GM10248 (cell line): ENCODE measurements at regions of chr2 and their contacts with region 1.

Region 1: DNA sequence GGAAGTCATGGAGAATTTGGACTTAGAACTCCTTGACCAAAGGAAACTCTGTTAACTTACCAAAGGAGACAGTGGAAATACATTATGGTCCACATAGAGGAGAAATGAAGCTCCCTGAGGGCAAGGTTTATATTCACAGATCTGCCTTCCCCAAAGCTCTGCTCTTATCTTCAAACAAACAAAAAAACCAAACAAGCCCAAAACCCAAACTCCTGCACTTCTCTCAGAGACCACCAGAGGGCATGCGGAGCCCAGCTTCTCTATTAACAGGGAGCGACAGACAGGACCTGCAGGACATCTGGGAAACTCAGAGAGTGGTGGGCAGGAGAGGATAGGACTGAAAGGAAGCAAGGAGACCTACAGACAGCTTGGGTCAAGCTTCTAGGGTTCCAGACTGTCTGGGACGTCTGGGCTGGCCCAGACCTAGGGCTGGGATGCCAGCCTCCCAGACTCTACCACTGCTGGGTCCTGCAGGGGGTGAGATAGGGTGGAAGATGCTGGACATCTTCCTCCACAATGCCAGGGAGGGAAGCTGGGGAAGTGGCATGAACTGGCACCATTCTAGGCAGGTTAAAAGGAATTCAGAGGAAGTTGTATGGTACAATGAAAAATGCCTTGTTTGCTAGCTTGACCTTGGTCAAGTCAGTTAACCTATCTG is 4.0 kb upstream of the WNT10A start:
- DNase-seq: peak; percentile 69
- CTCF ChIP-seq: peak; percentile 95

Region 2: DNA sequence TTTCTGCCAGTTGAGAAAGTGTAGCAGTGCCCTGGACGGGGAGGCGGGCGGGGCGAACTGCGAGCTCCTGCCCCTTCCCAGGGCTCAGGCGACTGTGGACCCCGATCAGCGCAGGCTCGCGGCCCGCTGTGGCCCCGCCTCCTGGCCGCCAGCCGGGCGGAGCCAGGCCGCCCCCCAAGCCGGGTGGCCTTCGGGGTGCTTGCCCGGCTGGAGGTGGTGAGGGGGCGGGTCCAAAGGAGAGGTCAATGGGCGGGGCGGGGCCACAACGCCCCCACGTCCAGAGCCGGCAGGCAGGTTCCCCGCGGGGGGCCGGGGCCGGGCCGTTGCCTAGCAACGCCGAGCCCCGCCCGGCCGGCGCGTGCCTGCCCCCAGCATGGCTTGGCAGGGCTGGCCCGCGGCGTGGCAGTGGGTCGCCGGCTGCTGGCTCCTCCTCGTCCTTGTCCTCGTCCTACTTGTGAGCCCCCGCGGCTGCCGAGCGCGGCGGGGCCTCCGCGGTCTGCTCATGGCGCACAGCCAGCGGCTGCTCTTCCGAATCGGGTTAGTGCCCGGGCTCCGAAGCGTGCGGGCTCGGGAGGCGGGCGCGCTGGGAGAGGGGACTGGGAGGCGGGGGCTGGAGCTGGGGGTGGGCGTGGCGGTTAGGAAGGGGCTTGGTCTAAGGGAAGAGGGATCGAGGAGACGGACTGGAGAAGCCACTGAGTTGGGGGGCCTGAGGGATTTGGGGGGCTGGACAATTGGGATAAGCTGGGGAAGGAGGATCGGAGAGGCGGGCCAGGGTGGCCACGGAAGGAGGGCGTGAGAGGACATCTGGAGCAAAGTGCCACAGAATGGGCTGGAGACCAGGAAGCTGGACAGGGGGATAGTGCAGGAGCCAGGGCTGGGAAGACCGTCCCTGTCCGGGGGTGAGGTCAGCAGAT is 553.5 kb before region 1 on chr2:
- CTCF ChIA-PET with region 1: no interaction called
- POLR2A ChIA-PET with region 1: no interaction called
- DNase-seq: peak; percentile 93
- CTCF ChIP-seq: no peak

Region 3: DNA sequence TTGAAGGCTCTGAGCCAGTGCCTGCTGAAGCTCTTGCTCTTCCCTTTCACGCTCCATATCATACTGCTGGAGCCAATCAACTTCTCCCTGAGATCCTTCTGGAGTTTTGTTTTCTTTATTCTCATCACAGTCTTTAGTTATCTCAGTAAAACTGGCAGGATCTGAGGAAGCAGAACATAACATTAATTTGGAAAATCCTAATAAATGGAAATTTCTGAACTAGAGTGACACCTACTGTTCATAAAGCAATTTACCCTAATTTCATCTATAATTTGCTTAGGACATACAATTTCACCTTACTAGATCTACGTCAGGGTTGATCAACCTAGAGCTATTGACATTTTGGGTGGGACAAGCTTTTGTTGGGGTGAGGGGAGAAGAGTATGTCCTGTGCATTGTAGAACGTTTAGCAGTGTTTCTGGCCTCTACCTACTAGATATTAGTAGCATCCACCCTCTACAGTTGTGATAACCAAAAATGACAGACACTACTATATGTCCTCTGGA is 410.6 kb before region 1 on chr2:
- CTCF ChIA-PET with region 1: no interaction called
- POLR2A ChIA-PET with region 1: no interaction called
- DNase-seq: no peak
- CTCF ChIP-seq: peak; percentile 18

Region 4: GRCh38 chr2:218859556-218859987 is 17.1 kb before region 1 on chr2 and contains the start of gene WNT6:
- CTCF ChIA-PET with region 1: interaction called, 42 read pairs
- POLR2A ChIA-PET with region 1: no interaction called
- DNase-seq: no peak
- CTCF ChIP-seq: no peak

Region 5: GRCh38 chr2:218898109-218898878 is 21.6 kb after region 1 on chr2:
- CTCF ChIA-PET with region 1: interaction called, 916 read pairs
- POLR2A ChIA-PET with region 1: interaction called, 16 read pairs
- DNase-seq: peak; percentile 85
- CTCF ChIP-seq: peak; percentile 99

Region 6: GRCh38 chr2:218927422-218927821 is 50.7 kb after region 1 on chr2:
- CTCF ChIA-PET with region 1: no interaction called
- POLR2A ChIA-PET with region 1: no interaction called
- DNase-seq: no peak
- CTCF ChIP-seq: no peak

Region 7: DNA sequence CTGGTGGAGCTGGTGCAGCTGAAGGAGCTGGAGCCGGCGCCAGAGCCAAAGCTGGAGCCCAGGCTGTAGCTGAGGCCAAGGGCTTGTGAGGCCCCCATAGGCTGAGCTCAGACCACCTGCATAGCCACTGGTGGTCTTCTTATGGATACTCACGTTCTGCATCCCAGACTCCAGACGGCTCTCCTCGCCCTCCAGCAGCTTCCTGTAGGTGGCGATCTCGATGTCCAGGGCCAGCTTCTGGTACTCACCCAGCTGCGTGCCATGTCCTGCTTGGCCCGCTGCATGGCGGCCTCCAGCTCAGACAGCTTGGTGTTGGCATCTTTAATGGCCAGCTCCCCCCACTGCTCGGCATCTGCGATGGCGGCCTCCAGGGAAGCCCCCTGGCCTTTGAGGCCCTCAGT is 76.8 kb after region 1 on chr2:
- CTCF ChIA-PET with region 1: interaction called, 16 read pairs
- POLR2A ChIA-PET with region 1: no interaction called
- DNase-seq: no peak
- CTCF ChIP-seq: peak; percentile 5

Region 8: DNA sequence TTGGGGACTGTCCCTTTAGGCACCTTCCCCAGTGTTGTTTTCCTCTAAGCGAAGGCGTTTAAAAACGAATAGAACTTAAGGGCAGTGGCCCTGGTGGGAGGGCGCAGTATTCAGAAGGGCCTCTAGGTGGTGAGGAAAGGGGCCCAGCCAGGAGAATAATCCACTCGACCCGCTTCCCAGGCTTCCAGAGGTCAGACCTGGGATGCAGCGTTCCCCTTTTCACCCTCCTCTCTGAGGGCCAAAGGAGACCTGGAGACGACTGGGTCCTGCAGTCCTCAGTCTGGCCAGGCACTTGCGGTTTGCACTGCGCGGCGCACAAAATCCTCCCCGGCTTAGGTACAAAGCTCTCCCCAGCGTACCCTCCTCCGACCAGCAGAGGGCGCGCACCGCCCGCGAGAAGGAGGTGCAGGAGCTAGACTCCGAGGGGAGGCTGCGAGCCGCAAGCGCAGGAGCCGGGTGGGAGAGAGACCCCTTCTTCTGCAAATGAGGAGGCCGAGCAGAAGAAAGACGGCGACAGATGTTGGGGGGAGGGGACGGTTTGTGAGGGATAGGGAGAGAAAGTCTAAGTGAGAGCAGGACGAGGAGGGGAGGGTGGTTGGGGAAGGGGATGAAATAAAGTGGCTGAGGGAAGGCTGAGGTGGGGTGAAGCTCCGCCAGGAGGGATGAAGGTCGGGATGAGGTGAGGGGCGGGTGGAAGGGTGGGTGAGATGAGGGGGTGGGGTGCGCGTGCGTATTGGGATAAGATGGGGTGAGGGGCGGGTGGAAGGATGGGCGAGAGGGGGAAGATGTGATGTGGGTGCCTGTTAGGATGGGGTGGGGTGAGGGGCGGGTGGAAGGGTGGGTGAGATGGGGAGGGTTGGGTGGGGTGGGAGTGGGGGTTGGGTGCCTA is 103.4 kb after region 1 on chr2:
- CTCF ChIA-PET with region 1: interaction called, 21 read pairs
- POLR2A ChIA-PET with region 1: no interaction called
- DNase-seq: peak; percentile 86
- CTCF ChIP-seq: peak; percentile 98